Naive thymus-derived CD4-positive, alpha-beta T cell (primary cell): ENCODE measurements at regions of chr5 and their contacts with region 1.

Region 1: DNA sequence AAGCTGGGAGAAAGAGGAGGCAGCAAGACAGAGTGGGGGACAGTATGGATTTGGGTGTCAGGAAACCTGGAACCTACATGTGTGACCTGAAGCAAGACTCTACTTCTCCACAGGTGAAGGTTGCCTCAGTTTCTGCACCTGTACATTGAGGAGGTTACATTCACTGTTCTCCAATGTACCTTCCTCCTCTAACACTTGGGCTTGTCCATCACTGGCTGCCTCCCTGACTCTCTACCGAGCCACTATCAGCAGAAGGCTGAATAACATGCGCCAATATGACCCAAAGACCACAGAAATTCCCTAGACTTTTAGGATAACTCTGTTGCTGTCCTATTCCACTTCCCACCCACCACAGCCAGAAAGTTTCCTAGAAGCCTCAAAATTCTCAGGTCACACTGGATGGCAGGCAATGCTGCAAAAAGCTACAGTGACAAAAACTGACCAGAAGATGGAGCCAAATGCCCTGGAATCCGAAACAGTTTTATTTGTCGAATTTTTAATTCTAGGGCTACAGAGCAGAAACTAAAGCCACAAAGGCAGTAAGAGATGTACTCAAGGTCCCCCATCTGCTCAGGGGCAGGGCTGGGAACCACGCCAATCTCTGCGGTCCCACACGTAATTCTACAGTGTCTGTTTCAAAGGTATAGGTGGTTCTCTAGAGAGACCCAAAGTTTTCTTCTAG is 64.4 kb downstream of the FAM114A2 start:
- DNase-seq: peak in 5 of 9 donors; percentile 29 to 49 (median 33)
- ATAC-seq: peak; percentile 47
- H3K4me3 ChIP-seq: no peak overlapping the region
- H3K4me3 Mint-ChIP-seq: no peak overlapping the region
- H3K27ac ChIP-seq: no peak overlapping the region
- H3K27ac Mint-ChIP-seq: no peak overlapping the region
- H3K4me1 ChIP-seq: no peaks in the 10 kb centered on the region
- H3K4me1 Mint-ChIP-seq: no peaks in the 10 kb centered on the region
- H3K27me3 ChIP-seq: no peaks in the 10 kb centered on the region
- H3K27me3 Mint-ChIP-seq: peaks cover 3 to 21% (median 11%) of the 10 kb centered on the region in 5 donors

Region 2: DNA sequence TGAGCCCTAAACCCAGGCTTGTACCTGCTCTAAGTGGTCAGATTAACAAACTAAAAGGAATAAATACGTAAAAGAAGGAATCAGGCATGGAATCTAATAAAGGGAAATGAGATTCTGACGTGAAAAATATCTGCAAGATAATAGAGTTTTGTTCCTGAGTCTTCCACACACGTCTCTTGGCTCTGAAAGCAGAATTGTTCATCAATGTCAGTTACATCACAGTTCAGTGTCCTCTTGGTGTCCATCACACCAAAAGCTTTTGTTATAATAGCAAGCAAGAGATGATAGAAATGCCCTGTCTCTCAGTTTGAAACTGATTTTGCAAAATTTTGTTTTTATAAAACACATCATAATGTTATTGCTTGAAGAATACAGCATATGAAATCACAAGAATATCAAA is 1534.5 kb before region 1 on chr5:
- CTCF ChIA-PET with region 1: no interaction called
- POLR2A ChIA-PET with region 1: no interaction called
- intact Hi-C with region 1: no loop called
- DNase-seq: no peak
- ATAC-seq: no peak
- H3K4me3 ChIP-seq: no peak overlapping the region
- H3K4me3 Mint-ChIP-seq: no peak overlapping the region
- H3K27ac ChIP-seq: no peak overlapping the region
- H3K27ac Mint-ChIP-seq: no peak overlapping the region
- H3K4me1 ChIP-seq: no peaks in the 10 kb centered on the region
- H3K4me1 Mint-ChIP-seq: no peaks in the 10 kb centered on the region
- H3K27me3 ChIP-seq: no peaks in the 10 kb centered on the region
- H3K27me3 Mint-ChIP-seq: peaks cover 0 to 16% (median 0%) of the 10 kb centered on the region in 5 donors

Region 3: DNA sequence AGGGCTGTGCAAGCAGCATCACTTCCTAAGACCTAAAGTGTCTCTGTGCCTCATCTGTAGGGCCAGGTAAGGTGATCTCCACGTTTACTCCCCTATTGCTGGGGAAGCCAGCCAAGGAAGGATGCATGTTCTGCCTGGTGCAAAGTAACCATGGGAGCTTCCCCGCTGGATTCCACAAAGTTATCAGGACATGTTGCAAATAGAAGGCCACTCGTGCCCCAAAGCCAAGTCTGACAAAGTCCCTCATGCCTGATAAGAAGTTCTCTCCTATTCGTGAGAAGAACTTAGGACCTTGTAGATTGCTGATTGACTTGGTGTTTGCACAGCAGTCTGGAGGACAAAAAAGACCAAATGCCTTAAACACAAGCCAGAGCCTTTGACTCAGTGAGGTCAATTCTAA is 17.1 kb before region 1 on chr5:
- CTCF ChIA-PET with region 1: no interaction called
- POLR2A ChIA-PET with region 1: no interaction called
- intact Hi-C with region 1: no loop called
- DNase-seq: no peak
- ATAC-seq: no peak
- H3K4me3 ChIP-seq: no peak overlapping the region
- H3K4me3 Mint-ChIP-seq: no peak overlapping the region
- H3K27ac ChIP-seq: no peak overlapping the region
- H3K27ac Mint-ChIP-seq: no peak overlapping the region
- H3K4me1 ChIP-seq: peaks cover 0 to 12% of the 10 kb centered on the region in 2 donors
- H3K4me1 Mint-ChIP-seq: peaks cover 0 to 13% (median 0%) of the 10 kb centered on the region in 7 donors
- H3K27me3 ChIP-seq: no peaks in the 10 kb centered on the region
- H3K27me3 Mint-ChIP-seq: peaks cover 0 to 10% (median 7%) of the 10 kb centered on the region in 5 donors

Region 4: DNA sequence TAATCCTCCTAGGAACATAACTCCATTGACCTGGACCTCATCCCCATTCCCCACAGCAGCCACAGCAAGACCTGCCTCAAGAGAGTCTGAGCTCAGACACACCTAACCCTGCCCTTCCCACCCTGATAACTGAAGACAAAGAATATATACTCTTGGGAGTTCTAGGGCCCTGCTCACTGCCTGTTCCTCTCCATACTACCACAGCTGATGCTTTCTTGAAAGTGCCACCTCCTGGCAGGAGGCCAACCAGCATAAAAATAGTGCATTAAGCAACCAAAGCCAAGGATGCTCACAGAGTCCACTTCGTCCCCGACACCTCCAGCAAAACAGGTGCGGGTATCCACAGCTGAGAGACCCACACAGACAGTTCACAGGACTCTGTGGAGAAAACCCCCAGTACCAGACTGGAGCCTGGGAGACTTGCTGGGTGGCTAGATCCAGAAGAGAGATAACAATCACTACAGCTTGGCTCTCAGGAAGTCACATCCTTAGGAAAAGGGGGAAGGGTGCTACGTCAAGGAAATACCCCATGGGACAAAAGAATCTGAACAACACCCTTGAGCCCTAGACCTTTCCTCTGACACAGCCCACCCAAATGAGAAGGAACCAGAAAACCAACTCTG is 40.9 kb after region 1 on chr5:
- CTCF ChIA-PET with region 1: no interaction called
- POLR2A ChIA-PET with region 1: no interaction called
- intact Hi-C with region 1: no loop called
- DNase-seq: no peak
- ATAC-seq: no peak
- H3K4me3 ChIP-seq: no peak overlapping the region
- H3K4me3 Mint-ChIP-seq: no peak overlapping the region
- H3K27ac ChIP-seq: no peak overlapping the region
- H3K27ac Mint-ChIP-seq: no peak overlapping the region
- H3K4me1 ChIP-seq: no peaks in the 10 kb centered on the region
- H3K4me1 Mint-ChIP-seq: peaks cover 0 to 24% (median 17%) of the 10 kb centered on the region in 7 donors
- H3K27me3 ChIP-seq: no peaks in the 10 kb centered on the region
- H3K27me3 Mint-ChIP-seq: no peaks in the 10 kb centered on the region

Region 5: DNA sequence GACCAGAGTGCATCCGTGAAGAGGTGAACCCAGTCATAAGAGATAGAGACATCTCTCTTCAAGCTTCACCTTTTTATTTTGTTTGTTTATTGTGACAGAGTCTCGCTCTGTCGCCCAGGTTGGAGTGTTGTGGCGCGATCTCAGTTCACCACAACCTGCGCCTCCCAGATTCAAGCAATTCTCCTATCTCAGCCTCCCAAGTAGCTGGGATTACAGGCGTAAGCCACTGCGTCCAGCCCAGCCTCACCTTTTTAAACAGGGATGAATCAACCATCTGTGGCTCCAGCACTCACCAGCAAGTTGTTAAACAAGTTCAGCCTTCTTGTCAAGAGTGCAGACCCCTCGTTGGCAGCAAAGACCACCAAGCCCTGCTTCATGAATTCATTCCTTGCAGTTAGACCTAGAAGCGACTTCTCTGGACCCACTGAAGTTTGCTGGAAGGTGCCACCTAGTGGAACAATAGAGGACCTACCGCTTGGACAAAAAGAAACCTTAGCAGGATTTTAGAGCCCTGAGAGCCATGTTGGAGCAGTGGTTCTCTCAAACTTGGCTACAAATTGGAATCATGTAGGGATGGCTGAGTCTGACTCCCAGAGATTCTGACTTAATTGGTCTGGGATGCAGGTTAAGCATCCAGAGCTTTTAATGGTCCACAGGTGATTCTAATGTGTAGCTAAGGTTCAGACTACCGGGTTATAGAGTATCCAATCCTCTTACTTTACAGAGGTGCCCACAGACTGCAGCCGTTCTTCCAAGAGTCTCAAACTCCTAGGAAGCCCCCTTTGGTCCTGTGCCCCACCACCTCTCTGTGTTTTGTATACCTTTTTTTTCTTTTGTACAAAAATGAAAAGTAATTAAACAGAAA is 205.8 kb after region 1 on chr5:
- CTCF ChIA-PET with region 1: interaction called, 4 read pairs
- POLR2A ChIA-PET with region 1: no interaction called
- intact Hi-C with region 1: loop called (anchors 1 kb)
- DNase-seq: peak in 6 of 9 donors; percentile 28 to 61 (median 43)
- ATAC-seq: peak; percentile 92
- H3K4me3 ChIP-seq: no peak overlapping the region
- H3K4me3 Mint-ChIP-seq: no peak overlapping the region
- H3K27ac ChIP-seq: no peak overlapping the region
- H3K27ac Mint-ChIP-seq: no peak overlapping the region
- H3K4me1 ChIP-seq: peaks cover 0 to 5% of the 10 kb centered on the region in 2 donors
- H3K4me1 Mint-ChIP-seq: peaks cover 0 to 31% (median 0%) of the 10 kb centered on the region in 7 donors
- H3K27me3 ChIP-seq: no peaks in the 10 kb centered on the region
- H3K27me3 Mint-ChIP-seq: peaks cover 0 to 22% (median 11%) of the 10 kb centered on the region in 5 donors

Region 6: GRCh38 chr5:154238776-154239481 is 264.7 kb after region 1 on chr5:
- CTCF ChIA-PET with region 1: no interaction called
- POLR2A ChIA-PET with region 1: no interaction called
- intact Hi-C with region 1: loop called in 1 of 2 experiments (anchors 5 kb)
- DNase-seq: no peak
- ATAC-seq: peak; percentile 20
- H3K4me3 ChIP-seq: no peak overlapping the region
- H3K4me3 Mint-ChIP-seq: no peak overlapping the region
- H3K27ac ChIP-seq: no peak overlapping the region
- H3K27ac Mint-ChIP-seq: peak overlapping the region in 1 of 9 donors; percentile 28
- H3K4me1 ChIP-seq: no peaks in the 10 kb centered on the region
- H3K4me1 Mint-ChIP-seq: peaks cover 14 to 58% (median 33%) of the 10 kb centered on the region in 7 donors
- H3K27me3 ChIP-seq: no peaks in the 10 kb centered on the region
- H3K27me3 Mint-ChIP-seq: no peaks in the 10 kb centered on the region

Region 7: GRCh38 chr5:154467655-154468354 is 493.5 kb after region 1 on chr5:
- CTCF ChIA-PET with region 1: no interaction called
- POLR2A ChIA-PET with region 1: no interaction called
- intact Hi-C with region 1: loop called in 1 of 2 experiments (anchors 5 kb)
- DNase-seq: peak; percentile 20 to 81 (median 57)
- ATAC-seq: peak; percentile 88
- H3K4me3 ChIP-seq: no peak overlapping the region
- H3K4me3 Mint-ChIP-seq: no peak overlapping the region
- H3K27ac ChIP-seq: no peak overlapping the region
- H3K27ac Mint-ChIP-seq: peak overlapping the region in 1 of 9 donors; percentile 12
- H3K4me1 ChIP-seq: peaks cover 0 to 5% of the 10 kb centered on the region in 2 donors
- H3K4me1 Mint-ChIP-seq: peaks cover 0 to 14% (median 3%) of the 10 kb centered on the region in 7 donors
- H3K27me3 ChIP-seq: peaks cover under 1 to 13% of the 10 kb centered on the region in 2 donors
- H3K27me3 Mint-ChIP-seq: peaks cover 30 to 60% (median 40%) of the 10 kb centered on the region in 5 donors

Region 8: GRCh38 chr5:154647114-154647760 is 673.0 kb after region 1 on chr5:
- CTCF ChIA-PET with region 1: no interaction called
- POLR2A ChIA-PET with region 1: no interaction called
- intact Hi-C with region 1: loop called in 1 of 2 experiments (anchors 10 kb)
- DNase-seq: no peak
- ATAC-seq: peak; percentile 52
- H3K4me3 ChIP-seq: peak overlapping the region; percentile 54
- H3K4me3 Mint-ChIP-seq: peak overlapping the region; percentile 72 to 87 (median 84)
- H3K27ac ChIP-seq: no peak overlapping the region
- H3K27ac Mint-ChIP-seq: peak overlapping the region in 1 of 9 donors; percentile 59
- H3K4me1 ChIP-seq: peaks cover 0 to 3% of the 10 kb centered on the region in 2 donors
- H3K4me1 Mint-ChIP-seq: peaks cover 10 to 19% (median 16%) of the 10 kb centered on the region in 7 donors
- H3K27me3 ChIP-seq: peaks cover 0 to 12% of the 10 kb centered on the region in 2 donors
- H3K27me3 Mint-ChIP-seq: peaks cover 18 to 46% (median 28%) of the 10 kb centered on the region in 5 donors